ENCODE measurements at regions of chr3 and their contacts with region 1.

Region 1: DNA sequence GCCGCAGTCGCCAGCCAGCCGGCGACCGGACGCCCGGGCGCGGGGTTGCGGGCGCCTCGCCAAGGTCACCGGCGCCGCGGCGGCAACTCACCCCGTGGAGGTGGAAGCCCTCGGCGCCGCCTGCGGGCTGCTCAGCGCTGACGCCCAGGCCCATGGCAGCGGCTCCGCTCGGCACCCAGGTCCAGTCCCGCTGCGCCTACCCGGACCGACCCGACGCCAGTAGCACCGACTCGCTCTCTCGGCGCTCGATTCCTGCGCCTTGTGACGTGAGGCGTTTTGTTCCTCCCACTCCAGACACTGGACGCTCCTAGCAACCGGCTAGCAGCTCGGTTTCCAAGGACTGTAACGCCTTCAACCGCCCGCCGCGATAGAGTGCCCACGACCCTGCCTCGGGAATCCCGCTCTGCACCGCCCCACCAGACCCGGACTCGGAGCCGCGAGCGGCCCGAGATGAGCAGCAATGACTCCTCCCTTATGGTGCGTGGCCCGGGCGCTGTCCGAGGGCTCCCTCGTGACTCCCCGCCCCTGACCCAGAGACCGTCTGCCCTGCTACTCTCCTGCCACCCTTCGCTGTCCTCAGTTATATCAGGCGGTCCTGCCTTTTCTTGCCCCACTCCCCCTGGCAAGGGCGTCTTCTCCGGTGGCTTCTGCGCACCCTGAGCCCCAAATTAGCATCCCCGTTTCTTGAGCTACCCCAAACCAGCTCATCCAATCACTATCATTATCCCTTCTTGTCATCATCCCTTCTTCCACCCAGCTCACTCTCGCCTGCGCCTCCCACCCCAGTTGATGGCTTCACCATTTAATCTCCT is at the starts of genes GORASP1 and TTC21A:
- DNase-seq: peak; percentile 74
- H3K4me3 ChIP-seq: peak within 1 kb of the TSS; percentile 91
- CTCF ChIP-seq: no peak

Region 2: DNA sequence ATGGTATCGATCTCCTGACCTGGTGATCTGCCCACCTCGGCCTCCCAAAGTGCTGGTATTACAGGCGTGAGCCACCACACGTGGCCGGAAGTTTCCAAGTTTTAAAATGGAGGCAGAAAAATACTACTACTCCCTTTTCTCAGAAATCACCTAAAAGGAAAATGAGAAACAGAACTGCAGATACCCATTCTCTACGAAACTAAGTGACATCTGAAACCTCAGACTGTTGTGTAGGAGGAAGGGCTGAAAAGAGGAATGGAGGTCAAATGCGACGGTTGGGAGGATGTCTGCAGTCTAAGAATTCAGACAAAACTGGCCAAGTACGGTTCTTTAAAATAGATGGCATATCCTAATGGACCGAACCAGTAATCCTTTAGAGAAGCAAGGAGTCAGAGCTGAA is 31.7 kb before region 1 on chr3:
- in situ Hi-C with region 1: no loop called
- DNase-seq: no peak
- H3K4me3 ChIP-seq: no peak overlapping the region
- CTCF ChIP-seq: no peak

Region 3: GRCh38 chr3:39177708-39178332 is 70.2 kb after region 1 on chr3:
- in situ Hi-C with region 1: loop called (anchors 10 kb)
- DNase-seq: peak; percentile 92
- H3K4me3 ChIP-seq: peak overlapping the region; percentile 45
- CTCF ChIP-seq: no peak

Measured in astrocyte of the cerebellum (primary cell).